PC-3 (cell line): ENCODE measurements at regions of chr11 and their contacts with region 1.

Region 1: GRCh38 chr11:86818466-86819192 is 18.3 kb downstream of the PRSS23 start:
- DNase-seq: peak; percentile 78
- ATAC-seq: peak; percentile 33
- H3K4me3 ChIP-seq: no peak overlapping the region
- H3K27ac ChIP-seq: peak overlapping the region; percentile 49
- H3K4me1 ChIP-seq: peaks cover 42% of the 10 kb centered on the region
- H3K27me3 ChIP-seq: no peaks in the 10 kb centered on the region
- CTCF ChIP-seq: peak; percentile 75

Region 2: GRCh38 chr11:86360775-86361395 is 457.7 kb before region 1 on chr11:
- CTCF ChIA-PET with region 1: interaction called, 3 read pairs
- POLR2A ChIA-PET with region 1: no interaction called
- intact Hi-C with region 1: loop called (anchors 2 kb)
- DNase-seq: peak; percentile 62
- ATAC-seq: peak; percentile 73
- H3K4me3 ChIP-seq: no peak overlapping the region
- H3K27ac ChIP-seq: no peak overlapping the region
- H3K4me1 ChIP-seq: no peaks in the 10 kb centered on the region
- H3K27me3 ChIP-seq: no peaks in the 10 kb centered on the region
- CTCF ChIP-seq: peak; percentile 65

Region 3: DNA sequence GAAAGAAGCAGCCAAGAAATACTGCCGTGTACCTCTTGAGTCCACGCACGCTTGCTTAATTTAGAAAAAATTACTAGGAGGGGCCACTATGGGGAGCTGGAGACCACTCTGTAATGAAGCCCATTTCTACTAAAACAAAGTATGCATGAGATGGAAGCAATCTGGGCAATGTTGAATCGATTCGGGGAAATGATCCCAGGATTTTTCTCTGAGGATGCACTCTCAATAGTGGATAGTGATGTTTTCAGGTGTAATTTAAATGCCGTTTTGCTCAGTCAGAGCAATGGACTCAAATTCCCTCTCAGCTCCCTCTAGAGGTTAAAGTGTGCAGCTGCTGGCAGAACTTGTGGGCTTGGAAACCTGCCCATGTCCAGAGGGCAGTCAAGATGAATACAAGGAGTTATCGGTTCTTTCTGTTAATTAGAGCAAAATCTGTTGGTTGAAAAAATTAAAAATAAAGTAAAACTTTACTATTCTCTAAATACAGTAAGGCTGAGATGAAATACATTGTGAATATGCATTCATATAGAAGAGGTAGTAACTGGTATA is 210.3 kb before region 1 on chr11:
- CTCF ChIA-PET with region 1: no interaction called
- POLR2A ChIA-PET with region 1: no interaction called
- intact Hi-C with region 1: loop called (anchors 1 kb)
- DNase-seq: peak; percentile 82
- ATAC-seq: peak; percentile 39; the same call in 1 of the 2 replicates
- H3K4me3 ChIP-seq: no peak overlapping the region
- H3K27ac ChIP-seq: peak overlapping the region; percentile 85
- H3K4me1 ChIP-seq: peaks cover 35% of the 10 kb centered on the region
- H3K27me3 ChIP-seq: no peaks in the 10 kb centered on the region
- CTCF ChIP-seq: peak; percentile 96

Region 4: GRCh38 chr11:86632499-86633269 is 185.9 kb before region 1 on chr11:
- CTCF ChIA-PET with region 1: no interaction called
- POLR2A ChIA-PET with region 1: no interaction called
- intact Hi-C with region 1: loop called (anchors 2 kb)
- DNase-seq: peak; percentile 92
- ATAC-seq: peak; percentile 98
- H3K4me3 ChIP-seq: no peak overlapping the region
- H3K27ac ChIP-seq: peak overlapping the region; percentile 91
- H3K4me1 ChIP-seq: peaks cover 29% of the 10 kb centered on the region
- H3K27me3 ChIP-seq: no peaks in the 10 kb centered on the region
- CTCF ChIP-seq: peak; percentile 28

Region 5: GRCh38 chr11:87076260-87076783 is 257.7 kb after region 1 on chr11:
- CTCF ChIA-PET with region 1: no interaction called
- POLR2A ChIA-PET with region 1: no interaction called
- intact Hi-C with region 1: no loop called
- DNase-seq: no peak
- ATAC-seq: no peak
- H3K4me3 ChIP-seq: no peak overlapping the region
- H3K27ac ChIP-seq: no peak overlapping the region
- H3K4me1 ChIP-seq: 0 out of 2 replicates have a peak, but pooled peaks cover 8% of the 10 kb centered on the region
- H3K27me3 ChIP-seq: no peaks in the 10 kb centered on the region
- CTCF ChIP-seq: no peak